MCF 10A (cell line): ENCODE measurements at regions of chr4 and their contacts with region 1.

Region 1: GRCh38 chr4:145234091-145234706 is 53.8 kb upstream of the OTUD4 start:
- DNase-seq: peak; percentile 84
- H3K4me3 Mint-ChIP-seq: no peak overlapping the region
- H3K27ac Mint-ChIP-seq: no peak overlapping the region
- H3K4me1 Mint-ChIP-seq: no peaks in the 10 kb centered on the region
- H3K27me3 Mint-ChIP-seq: no peaks in the 10 kb centered on the region
- CTCF ChIP-seq: peak; percentile 82

Region 2: DNA sequence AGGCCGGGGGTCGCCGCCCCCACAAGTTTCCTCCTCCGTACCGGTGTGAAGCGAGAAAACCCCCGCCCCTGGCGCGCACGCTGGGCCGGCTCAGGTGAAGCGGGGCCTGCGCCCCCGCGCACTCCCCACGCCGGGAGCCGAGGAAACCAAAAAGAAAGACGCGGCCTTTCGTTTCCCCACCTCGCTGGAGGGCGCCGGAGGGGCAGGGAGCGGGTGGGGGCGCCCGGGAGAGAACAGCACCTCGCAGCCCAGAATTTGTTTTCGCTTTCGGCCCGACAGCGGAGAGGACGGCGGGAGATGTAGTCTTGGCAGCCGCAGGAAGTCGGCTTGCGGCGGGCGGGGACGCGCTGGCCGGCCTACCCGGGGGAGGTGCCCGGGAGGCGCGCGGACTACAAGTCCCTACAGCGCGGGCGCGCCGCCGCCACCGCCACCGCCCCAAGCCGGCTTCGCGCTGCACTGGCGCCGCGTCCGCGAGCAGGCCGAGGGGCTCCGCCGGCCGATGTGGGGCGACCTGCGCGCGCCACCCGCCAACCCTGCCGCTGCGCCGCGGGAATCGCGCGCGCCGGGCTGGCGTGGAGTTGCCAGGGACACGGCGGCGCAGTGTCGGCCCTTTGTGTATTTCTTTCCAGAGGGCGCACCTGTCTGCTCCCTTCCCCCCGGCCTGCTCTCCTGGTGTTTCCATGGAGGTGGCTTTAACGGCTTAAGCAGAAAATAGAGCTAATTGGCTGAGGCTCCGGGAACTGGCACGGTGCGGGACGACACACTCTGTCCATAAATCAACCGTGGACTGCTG is 53.7 kb before region 1 on chr4 and contains the start of gene OTUD4:
- CTCF ChIA-PET with region 1: interaction called, 13 read pairs
- POLR2A ChIA-PET with region 1: interaction called, 3 read pairs
- intact Hi-C with region 1: no loop called
- DNase-seq: peak; percentile 92
- H3K4me3 Mint-ChIP-seq: peak within 1 kb of the TSS; percentile 73
- H3K27ac Mint-ChIP-seq: peak within 1 kb of the TSS; percentile 85
- H3K4me1 Mint-ChIP-seq: peaks cover 9% of the 10 kb centered on the region
- H3K27me3 Mint-ChIP-seq: no peaks in the 10 kb centered on the region
- CTCF ChIP-seq: no peak
- total RNA-seq, gene OTUD4: 66.2 and 68.0 TPM in 2 replicates

Region 3: DNA sequence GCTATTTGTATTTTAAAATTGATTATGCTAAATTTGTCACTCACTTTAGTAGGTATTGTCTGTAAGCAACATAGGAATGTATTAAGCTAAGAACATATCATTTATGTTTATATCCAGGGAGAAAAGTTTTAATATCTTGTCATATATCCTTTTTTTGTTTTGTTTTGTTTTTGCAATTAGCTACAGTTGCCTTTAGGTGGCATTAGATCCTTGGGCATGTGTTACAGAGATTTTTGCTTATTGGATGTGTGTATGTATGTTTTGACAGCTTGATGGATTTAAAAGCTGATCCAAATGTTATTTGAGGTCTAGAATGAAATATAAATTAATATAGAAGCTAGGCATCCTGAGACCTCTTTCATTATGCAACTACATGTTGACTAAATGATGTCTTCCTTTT is 17.7 kb before region 1 on chr4:
- CTCF ChIA-PET with region 1: interaction called, 34 read pairs
- POLR2A ChIA-PET with region 1: no interaction called
- intact Hi-C with region 1: no loop called
- DNase-seq: peak; percentile 48
- H3K4me3 Mint-ChIP-seq: no peak overlapping the region
- H3K27ac Mint-ChIP-seq: no peak overlapping the region
- H3K4me1 Mint-ChIP-seq: no peaks in the 10 kb centered on the region
- H3K27me3 Mint-ChIP-seq: no peaks in the 10 kb centered on the region
- CTCF ChIP-seq: peak; percentile 61

Region 4: DNA sequence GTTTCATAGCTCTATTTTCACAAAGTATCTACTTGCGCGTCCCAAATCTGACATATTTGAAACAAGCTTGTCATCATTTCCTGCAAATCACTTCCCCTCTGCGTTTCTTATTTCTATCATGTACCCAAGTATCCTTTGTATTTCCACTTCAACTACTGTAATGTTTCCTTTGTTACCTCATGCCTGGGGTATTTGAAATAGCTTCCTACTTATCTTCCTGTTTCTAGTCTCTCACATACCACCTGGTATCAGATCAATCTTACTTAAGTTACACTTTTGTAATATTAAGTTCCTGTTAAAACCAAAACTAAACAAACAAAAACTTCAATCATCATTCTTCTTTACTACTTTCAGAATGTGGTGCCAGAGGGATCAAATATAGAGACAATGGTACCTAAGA is 153.8 kb after region 1 on chr4:
- CTCF ChIA-PET with region 1: no interaction called
- POLR2A ChIA-PET with region 1: no interaction called
- intact Hi-C with region 1: no loop called
- DNase-seq: no peak
- H3K4me3 Mint-ChIP-seq: no peak overlapping the region
- H3K27ac Mint-ChIP-seq: no peak overlapping the region
- H3K4me1 Mint-ChIP-seq: no peaks in the 10 kb centered on the region
- H3K27me3 Mint-ChIP-seq: peaks cover under 1% of the 10 kb centered on the region
- CTCF ChIP-seq: no peak

Region 5: DNA sequence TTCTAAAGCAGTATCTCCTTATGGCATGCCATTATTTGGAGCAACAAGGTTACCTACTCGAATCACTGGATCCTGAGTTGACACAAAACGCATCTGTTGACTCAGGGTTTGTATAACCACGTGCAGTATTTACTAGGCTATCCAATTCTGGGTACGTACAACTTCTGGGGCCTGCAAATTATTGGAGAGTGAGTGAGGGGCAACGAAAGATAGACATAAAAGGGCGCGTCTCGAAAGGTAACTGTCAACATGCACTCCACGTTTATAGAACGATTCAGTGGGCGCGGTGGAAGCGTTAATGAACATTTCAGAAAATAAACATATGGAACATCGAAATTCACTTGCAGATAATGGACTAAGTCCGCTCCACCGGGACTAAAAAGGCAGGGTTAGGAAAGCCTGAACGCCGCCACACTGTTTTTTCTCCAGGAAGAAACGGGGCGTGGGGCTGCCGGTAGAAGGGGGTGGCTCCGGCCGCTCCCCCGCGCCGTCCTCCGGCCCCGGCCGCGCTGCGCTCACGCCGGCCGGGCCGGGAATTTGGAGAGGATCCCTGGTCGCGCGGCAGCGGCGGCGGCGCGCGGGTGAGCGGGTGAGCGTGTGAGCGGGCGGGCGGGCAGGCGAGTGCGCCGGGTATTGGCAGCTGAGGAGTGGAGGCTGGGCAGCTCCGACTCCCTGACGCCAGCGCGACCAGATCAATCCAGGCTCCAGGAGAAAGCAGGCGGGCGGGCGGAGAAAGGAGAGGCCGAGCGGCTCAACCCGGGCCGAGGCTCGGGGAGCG is 247.2 kb after region 1 on chr4 and contains the start of gene SMAD1:
- CTCF ChIA-PET with region 1: interaction called, 9 read pairs
- POLR2A ChIA-PET with region 1: interaction called, 5 read pairs
- intact Hi-C with region 1: loop called (anchors 1 kb)
- DNase-seq: peak; percentile 83
- H3K4me3 Mint-ChIP-seq: no peak within 1 kb of the TSS
- H3K27ac Mint-ChIP-seq: no peak within 1 kb of the TSS
- H3K4me1 Mint-ChIP-seq: peaks cover 12% of the 10 kb centered on the region
- H3K27me3 Mint-ChIP-seq: no peaks in the 10 kb centered on the region
- CTCF ChIP-seq: no peak
- total RNA-seq, gene SMAD1: 23.7 and 27.9 TPM in 2 replicates

Region 6: GRCh38 chr4:145552181-145552822 is 318.1 kb after region 1 on chr4:
- CTCF ChIA-PET with region 1: interaction called, 36 read pairs
- POLR2A ChIA-PET with region 1: interaction called, 3 read pairs
- intact Hi-C with region 1: loop called (anchors 1 kb)
- DNase-seq: no peak
- H3K4me3 Mint-ChIP-seq: no peak overlapping the region
- H3K27ac Mint-ChIP-seq: no peak overlapping the region
- H3K4me1 Mint-ChIP-seq: peaks cover 12% of the 10 kb centered on the region
- H3K27me3 Mint-ChIP-seq: no peaks in the 10 kb centered on the region
- CTCF ChIP-seq: no peak

Region 7: GRCh38 chr4:145557720-145558119 is 323.5 kb after region 1 on chr4:
- CTCF ChIA-PET with region 1: interaction called, 36 read pairs
- POLR2A ChIA-PET with region 1: interaction called, 4 read pairs
- intact Hi-C with region 1: loop called (anchors 1 kb)
- DNase-seq: peak; percentile 72
- H3K4me3 Mint-ChIP-seq: no peak overlapping the region
- H3K27ac Mint-ChIP-seq: peak overlapping the region; percentile 37
- H3K4me1 Mint-ChIP-seq: no peaks in the 10 kb centered on the region
- H3K27me3 Mint-ChIP-seq: no peaks in the 10 kb centered on the region
- CTCF ChIP-seq: peak; percentile 90

Region 8: DNA sequence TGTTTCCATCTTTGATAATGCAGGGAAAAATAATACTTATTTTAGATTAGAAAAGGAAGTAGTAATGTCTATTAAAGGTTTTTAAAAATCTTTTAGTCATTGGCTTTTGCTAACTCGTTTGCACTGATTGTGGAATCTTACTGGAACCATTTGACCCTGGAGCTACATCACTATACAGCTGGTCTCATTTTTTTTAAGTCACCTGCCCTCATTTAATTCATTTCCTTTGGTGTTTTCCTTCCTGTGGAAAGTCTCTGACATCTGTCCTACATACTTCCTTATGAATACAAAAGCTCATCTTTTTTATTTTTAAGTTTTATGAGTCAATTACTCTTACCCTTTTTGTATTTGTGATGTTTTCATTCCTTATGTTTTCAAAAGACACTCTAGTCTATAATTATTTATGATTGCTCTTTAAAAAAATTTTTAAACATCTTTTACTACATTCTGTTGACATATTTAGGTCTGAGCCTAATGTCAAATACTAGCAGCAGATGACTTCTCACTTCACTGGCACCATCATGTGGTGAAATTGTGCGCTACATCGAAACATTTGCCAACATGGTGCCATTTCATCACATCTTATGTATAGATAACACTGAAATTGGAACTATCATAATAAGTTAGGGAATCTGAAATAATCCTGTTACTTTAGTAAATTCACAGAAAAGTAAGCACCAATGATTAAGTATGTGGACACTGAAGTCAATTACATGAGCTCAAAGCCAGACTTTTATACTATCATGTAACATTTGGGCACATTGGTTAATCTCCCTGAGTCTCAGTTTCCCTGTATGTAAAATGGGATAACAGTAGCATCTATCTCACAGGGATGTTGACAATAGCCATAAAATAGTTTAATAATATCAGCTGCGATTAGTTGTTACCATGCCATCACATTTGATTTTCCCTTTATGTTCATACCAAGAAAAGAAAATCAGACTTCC is 375.6 kb after region 1 on chr4:
- CTCF ChIA-PET with region 1: interaction called, 60 read pairs
- POLR2A ChIA-PET with region 1: interaction called, 5 read pairs
- intact Hi-C with region 1: loop called (anchors 1 kb)
- DNase-seq: peak; percentile 83
- H3K4me3 Mint-ChIP-seq: no peak overlapping the region
- H3K27ac Mint-ChIP-seq: no peak overlapping the region
- H3K4me1 Mint-ChIP-seq: no peaks in the 10 kb centered on the region
- H3K27me3 Mint-ChIP-seq: no peaks in the 10 kb centered on the region
- CTCF ChIP-seq: peak; percentile 77

Region 9: DNA sequence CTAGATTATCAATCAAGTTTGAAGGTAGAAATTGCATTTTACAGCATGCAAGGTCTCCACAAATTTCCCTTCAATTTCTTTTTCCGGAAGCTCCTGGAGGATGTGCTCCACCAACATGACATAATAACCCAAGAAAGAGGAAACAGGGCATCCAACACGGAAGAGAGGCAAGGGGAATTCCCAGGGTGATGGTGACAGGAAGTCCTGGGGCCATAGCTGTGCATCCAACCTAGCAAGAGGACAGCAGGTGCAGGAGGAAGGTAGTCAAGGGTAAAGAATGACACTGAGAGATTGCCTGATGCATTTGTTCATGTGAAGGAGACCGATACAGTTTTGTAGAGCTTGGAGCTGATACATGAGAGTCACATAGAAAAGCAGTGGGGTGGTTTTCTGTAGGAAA is 825.7 kb after region 1 on chr4:
- CTCF ChIA-PET with region 1: no interaction called
- POLR2A ChIA-PET with region 1: no interaction called
- intact Hi-C with region 1: no loop called
- DNase-seq: no peak
- H3K4me3 Mint-ChIP-seq: no peak overlapping the region
- H3K27ac Mint-ChIP-seq: no peak overlapping the region
- H3K4me1 Mint-ChIP-seq: no peaks in the 10 kb centered on the region
- H3K27me3 Mint-ChIP-seq: no peaks in the 10 kb centered on the region
- CTCF ChIP-seq: no peak

Region 10: GRCh38 chr4:146564492-146564891 is 1330.3 kb after region 1 on chr4:
- CTCF ChIA-PET with region 1: no interaction called
- POLR2A ChIA-PET with region 1: no interaction called
- intact Hi-C with region 1: no loop called
- DNase-seq: no peak
- H3K4me3 Mint-ChIP-seq: no peak overlapping the region
- H3K27ac Mint-ChIP-seq: no peak overlapping the region
- H3K4me1 Mint-ChIP-seq: peaks cover 12% of the 10 kb centered on the region
- H3K27me3 Mint-ChIP-seq: no peaks in the 10 kb centered on the region
- CTCF ChIP-seq: no peak